IMR-90 (cell line): ENCODE measurements at regions of chr20 and their contacts with region 1.

Region 1: GRCh38 chr20:35303735-35304491 is 11.7 kb upstream of the FAM83C start:
- DNase-seq: peak; percentile 92
- ATAC-seq: peak; percentile 33
- H3K4me3 ChIP-seq: no peak overlapping the region
- H3K27ac ChIP-seq: peak overlapping the region; percentile 85
- H3K4me1 ChIP-seq: peaks cover 59% of the 10 kb centered on the region
- H3K27me3 ChIP-seq: no peaks in the 10 kb centered on the region
- CTCF ChIP-seq: peak; percentile 94
- POLR2A ChIP-seq: no peak
- RAD21 ChIP-seq: peak; percentile 96

Region 2: GRCh38 chr20:34604980-34605788 is 698.7 kb before region 1 on chr20:
- CTCF ChIA-PET with region 1: no interaction called
- POLR2A ChIA-PET with region 1: no interaction called
- dilution Hi-C with region 1: no loop called
- in situ Hi-C with region 1: no loop called
- intact Hi-C with region 1: no loop called
- DNase-seq: peak; percentile 83
- ATAC-seq: peak; percentile 72
- H3K4me3 ChIP-seq: no peak overlapping the region
- H3K27ac ChIP-seq: no peak overlapping the region
- H3K4me1 ChIP-seq: peaks cover 3% of the 10 kb centered on the region; the same call in 1 of the 2 replicates
- H3K27me3 ChIP-seq: no peaks in the 10 kb centered on the region
- CTCF ChIP-seq: no peak
- POLR2A ChIP-seq: no peak
- RAD21 ChIP-seq: no peak

Region 3: DNA sequence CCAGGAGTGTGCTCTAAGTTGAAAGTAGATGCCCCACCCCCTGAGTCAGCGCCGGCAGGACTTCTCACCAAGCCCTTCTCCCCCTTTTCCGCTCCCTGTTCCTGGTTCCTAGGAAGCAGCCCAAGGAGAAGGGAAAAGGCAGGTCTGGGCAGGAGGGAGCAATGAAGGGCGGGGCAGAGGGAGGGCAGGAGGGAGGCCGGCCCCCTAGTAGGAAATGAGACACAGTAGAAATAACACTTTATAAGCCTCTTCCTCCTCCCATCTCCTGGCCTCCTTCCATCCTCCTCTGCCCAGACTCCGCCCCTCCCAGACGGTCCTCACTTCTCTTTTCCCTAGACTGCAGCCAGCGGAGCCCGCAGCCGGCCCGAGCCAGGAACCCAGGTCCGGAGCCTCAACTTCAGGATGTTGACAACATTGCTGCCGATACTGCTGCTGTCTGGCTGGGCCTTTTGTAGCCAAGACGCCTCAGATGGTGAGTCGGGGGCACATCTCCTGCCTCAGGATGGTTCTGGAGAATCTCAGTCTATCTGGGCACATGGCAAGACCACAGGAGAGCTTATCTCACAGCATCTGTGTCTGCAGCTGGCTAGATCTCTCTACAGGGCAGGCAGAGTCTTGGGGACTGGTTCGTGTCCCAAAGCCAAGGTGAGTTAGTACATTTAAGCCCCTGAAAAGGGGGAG is 132.0 kb before region 1 on chr20 and contains the start of gene PROCR:
- CTCF ChIA-PET with region 1: no interaction called
- POLR2A ChIA-PET with region 1: no interaction called
- dilution Hi-C with region 1: no loop called
- in situ Hi-C with region 1: no loop called
- intact Hi-C with region 1: no loop called
- DNase-seq: peak; percentile 90
- ATAC-seq: peak; percentile 98
- H3K4me3 ChIP-seq: peak within 1 kb of the TSS; percentile 53
- H3K27ac ChIP-seq: peak within 1 kb of the TSS; percentile 69
- H3K4me1 ChIP-seq: peaks cover 5% of the 10 kb centered on the region; the same call in 1 of the 2 replicates
- H3K27me3 ChIP-seq: no peaks in the 10 kb centered on the region
- CTCF ChIP-seq: no peak
- POLR2A ChIP-seq: no peak
- RAD21 ChIP-seq: no peak
- total RNA-seq, gene PROCR: 25.0 and 36.4 TPM in 2 replicates

Region 4: DNA sequence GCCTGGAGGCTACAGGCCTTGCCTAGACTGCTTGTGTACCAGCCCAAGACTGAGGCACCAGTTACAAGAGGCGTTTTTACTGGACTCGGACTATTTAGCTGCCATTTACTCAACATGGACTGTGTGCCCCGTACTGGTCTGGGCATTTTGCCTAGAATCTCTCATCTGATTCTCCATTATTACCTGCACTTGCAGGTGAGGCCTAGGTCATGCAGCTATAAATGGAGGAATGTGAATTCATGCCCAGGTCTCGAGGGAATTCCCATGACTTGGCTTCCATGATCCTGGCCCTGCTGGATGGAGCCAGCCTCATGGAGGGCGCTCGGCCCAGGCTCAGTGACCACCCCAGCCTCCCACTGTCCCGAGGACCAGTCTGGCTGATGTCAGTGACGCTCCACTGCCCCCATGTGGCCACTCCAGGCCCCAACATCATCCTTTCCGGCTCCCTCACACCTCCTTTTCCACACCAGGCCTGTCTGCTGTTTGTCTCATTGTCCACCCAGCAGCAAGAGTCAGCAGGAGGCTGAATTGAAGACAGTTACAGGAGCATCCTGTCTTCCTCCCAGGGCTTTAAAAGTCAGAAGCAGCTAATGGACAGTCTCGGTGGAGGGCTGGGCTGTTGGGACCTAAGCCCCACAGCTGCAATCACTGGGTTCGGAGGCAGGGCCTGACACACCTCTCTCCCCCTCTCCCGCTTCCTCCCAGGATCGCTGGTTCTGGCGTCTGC is 34.7 kb before region 1 on chr20:
- CTCF ChIA-PET with region 1: no interaction called
- POLR2A ChIA-PET with region 1: no interaction called
- dilution Hi-C with region 1: no loop called
- in situ Hi-C with region 1: no loop called
- intact Hi-C with region 1: no loop called
- DNase-seq: peak; percentile 62
- ATAC-seq: peak; percentile 84
- H3K4me3 ChIP-seq: no peak overlapping the region
- H3K27ac ChIP-seq: no peak overlapping the region
- H3K4me1 ChIP-seq: no peaks in the 10 kb centered on the region
- H3K27me3 ChIP-seq: no peaks in the 10 kb centered on the region
- CTCF ChIP-seq: peak; percentile 79
- POLR2A ChIP-seq: no peak
- RAD21 ChIP-seq: peak; percentile 89

Region 5: GRCh38 chr20:35339007-35339406 is 35.1 kb after region 1 on chr20:
- CTCF ChIA-PET with region 1: interaction called, 3 read pairs
- POLR2A ChIA-PET with region 1: no interaction called
- dilution Hi-C with region 1: no loop called
- in situ Hi-C with region 1: no loop called
- intact Hi-C with region 1: loop called (anchors 2 kb)
- DNase-seq: peak; percentile 99
- ATAC-seq: peak; percentile 93
- H3K4me3 ChIP-seq: no peak overlapping the region
- H3K27ac ChIP-seq: peak overlapping the region; percentile 72; the same call in 1 of the 2 replicates
- H3K4me1 ChIP-seq: peaks cover 36% of the 10 kb centered on the region
- H3K27me3 ChIP-seq: no peaks in the 10 kb centered on the region
- CTCF ChIP-seq: no peak
- POLR2A ChIP-seq: no peak
- RAD21 ChIP-seq: no peak

Region 6: DNA sequence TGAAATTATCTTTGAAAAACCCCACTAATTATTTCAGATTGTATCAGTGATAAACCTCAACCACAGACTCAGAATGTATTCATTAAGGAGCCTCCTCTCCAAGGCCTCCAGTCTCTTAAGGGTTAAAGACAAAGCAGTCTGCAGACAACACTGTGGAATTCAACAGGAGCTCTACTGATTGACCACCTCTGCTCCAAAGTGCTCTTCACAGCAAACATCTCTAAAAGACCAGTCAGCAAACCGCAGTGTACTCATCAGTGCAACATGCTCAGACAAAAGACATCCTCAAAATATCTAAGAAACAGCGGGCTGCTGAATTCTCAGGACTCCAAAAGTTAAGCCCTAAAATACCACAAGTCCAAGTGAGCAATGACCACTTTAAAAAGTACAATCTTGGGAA is 65.9 kb after region 1 on chr20:
- CTCF ChIA-PET with region 1: interaction called, 3 read pairs
- POLR2A ChIA-PET with region 1: no interaction called
- dilution Hi-C with region 1: no loop called
- in situ Hi-C with region 1: no loop called
- intact Hi-C with region 1: loop called (anchors 5 kb)
- DNase-seq: peak; percentile 87
- ATAC-seq: peak; percentile 91
- H3K4me3 ChIP-seq: no peak overlapping the region
- H3K27ac ChIP-seq: no peak overlapping the region
- H3K4me1 ChIP-seq: peaks cover 7% of the 10 kb centered on the region
- H3K27me3 ChIP-seq: no peaks in the 10 kb centered on the region
- CTCF ChIP-seq: no peak
- POLR2A ChIP-seq: no peak
- RAD21 ChIP-seq: peak; percentile 23; the same call in 1 of the 2 replicates

Region 7: DNA sequence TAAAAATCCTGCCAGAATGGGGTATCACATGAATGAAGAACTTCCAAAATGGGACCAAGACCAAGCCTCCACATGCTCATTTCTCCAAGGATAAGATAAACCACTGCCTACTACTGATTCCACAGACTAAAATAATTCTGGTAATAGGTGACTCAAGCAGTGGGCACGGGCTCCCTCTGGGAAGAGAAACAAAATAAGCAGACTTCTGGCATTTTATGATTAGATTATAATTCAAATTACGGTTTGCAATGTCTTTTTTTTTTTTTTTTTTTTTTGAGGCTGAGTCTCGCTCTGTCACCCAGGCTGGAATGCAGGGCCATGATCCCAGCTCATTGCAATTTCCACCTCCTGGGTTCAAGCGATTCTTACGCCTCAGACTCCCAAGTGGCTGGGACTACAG is 91.8 kb after region 1 on chr20:
- CTCF ChIA-PET with region 1: interaction called, 3 read pairs
- POLR2A ChIA-PET with region 1: no interaction called
- dilution Hi-C with region 1: no loop called
- in situ Hi-C with region 1: no loop called
- intact Hi-C with region 1: loop called (anchors 1 kb)
- DNase-seq: peak; percentile 81
- ATAC-seq: peak; percentile 88
- H3K4me3 ChIP-seq: no peak overlapping the region
- H3K27ac ChIP-seq: peak overlapping the region; percentile 27; the same call in 1 of the 2 replicates
- H3K4me1 ChIP-seq: peaks cover 8% of the 10 kb centered on the region
- H3K27me3 ChIP-seq: no peaks in the 10 kb centered on the region
- CTCF ChIP-seq: peak; percentile 38; the same call in 1 of the 2 replicates
- POLR2A ChIP-seq: no peak
- RAD21 ChIP-seq: peak; percentile 43

Region 8: DNA sequence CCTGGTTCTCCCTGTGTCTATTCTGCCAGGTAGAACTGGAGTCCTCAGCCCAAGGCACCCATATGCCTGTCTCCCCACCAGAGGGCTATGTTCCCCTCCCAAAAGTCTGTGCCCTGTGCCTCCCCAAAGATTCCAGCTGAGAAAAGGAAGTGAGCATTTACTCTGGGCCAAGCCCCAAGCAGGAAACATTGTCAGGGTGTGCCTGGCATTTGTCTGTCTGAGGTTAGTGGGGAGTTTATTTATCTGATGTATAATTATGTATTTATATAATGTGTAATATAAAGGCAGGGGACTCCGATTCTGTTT is 128.5 kb after region 1 on chr20:
- CTCF ChIA-PET with region 1: no interaction called
- POLR2A ChIA-PET with region 1: interaction called, 3 read pairs
- dilution Hi-C with region 1: no loop called
- in situ Hi-C with region 1: loop called (anchors 5 kb)
- intact Hi-C with region 1: no loop called
- DNase-seq: no peak
- ATAC-seq: no peak
- H3K4me3 ChIP-seq: no peak overlapping the region
- H3K27ac ChIP-seq: no peak overlapping the region
- H3K4me1 ChIP-seq: peaks cover 6% of the 10 kb centered on the region; the same call in 1 of the 2 replicates
- H3K27me3 ChIP-seq: no peaks in the 10 kb centered on the region
- CTCF ChIP-seq: no peak
- POLR2A ChIP-seq: no peak
- RAD21 ChIP-seq: no peak

Region 9: DNA sequence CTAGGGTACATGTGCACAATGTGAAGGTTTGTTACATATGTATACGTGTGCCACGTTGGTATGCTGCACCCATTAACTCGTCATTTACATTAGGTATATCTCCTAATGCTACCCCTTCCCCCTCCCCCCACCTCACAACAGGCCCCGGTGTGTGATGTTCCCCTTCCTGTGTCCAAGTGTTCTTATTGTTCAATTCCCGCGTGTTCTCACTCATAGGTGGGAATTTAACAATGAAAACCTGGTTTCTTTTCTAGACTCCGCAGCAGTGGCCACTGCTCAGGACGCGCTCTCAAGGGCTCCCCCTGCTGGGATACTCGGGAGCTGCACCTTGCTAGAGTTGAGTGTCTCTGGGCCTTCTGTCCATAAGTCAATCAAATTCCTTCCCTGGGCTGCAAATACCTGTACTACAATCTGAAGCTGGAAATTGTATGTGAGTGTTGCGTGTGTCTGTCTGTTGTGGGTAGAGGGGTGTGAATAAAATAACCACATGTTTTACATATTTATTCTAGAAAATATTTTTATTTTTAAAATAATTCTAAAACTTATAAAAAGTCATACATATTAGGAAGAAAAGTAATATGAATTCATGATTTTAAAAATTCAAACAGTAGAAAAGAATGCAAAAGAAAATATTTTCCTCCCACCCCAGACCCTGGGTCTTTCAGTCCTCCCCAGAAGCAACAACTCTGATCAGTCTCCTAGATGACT is 143.3 kb after region 1 on chr20:
- CTCF ChIA-PET with region 1: interaction called, 9 read pairs
- POLR2A ChIA-PET with region 1: interaction called, 4 read pairs
- dilution Hi-C with region 1: no loop called
- in situ Hi-C with region 1: no loop called
- intact Hi-C with region 1: loop called (anchors 1 kb)
- DNase-seq: peak; percentile 73
- ATAC-seq: peak; percentile 96
- H3K4me3 ChIP-seq: peak overlapping the region; percentile 32; the same call in 1 of the 2 replicates
- H3K27ac ChIP-seq: no peak overlapping the region
- H3K4me1 ChIP-seq: peaks cover 2% of the 10 kb centered on the region
- H3K27me3 ChIP-seq: no peaks in the 10 kb centered on the region
- CTCF ChIP-seq: peak; percentile 85
- POLR2A ChIP-seq: no peak
- RAD21 ChIP-seq: peak; percentile 82